Natural killer cell (primary cell): ENCODE measurements at regions of chr11 and their contacts with region 1.

Region 1: GRCh38 chr11:47514825-47515647 is 37.9 kb downstream of the CELF1 start:
- DNase-seq: no peak
- ATAC-seq: peak; percentile 32 to 56 (median 55)
- H3K4me3 ChIP-seq: no peak overlapping the region
- H3K4me3 Mint-ChIP-seq: peak overlapping the region; percentile 65
- H3K27ac ChIP-seq: peak overlapping the region; percentile 58
- H3K27ac Mint-ChIP-seq: peak overlapping the region; percentile 53 to 80
- H3K4me1 ChIP-seq: peaks cover 45% of the 10 kb centered on the region
- H3K4me1 Mint-ChIP-seq: peaks cover 58 to 63% of the 10 kb centered on the region in 2 donors
- H3K27me3 ChIP-seq: no peaks in the 10 kb centered on the region
- H3K27me3 Mint-ChIP-seq: no peaks in the 10 kb centered on the region
- CTCF ChIP-seq: no peak

Region 2: GRCh38 chr11:47378010-47378835 is 136.8 kb before region 1 on chr11 and contains the start of gene SPI1:
- intact Hi-C with region 1: no loop called
- DNase-seq: peak in 1 of 2 donors; percentile 27
- ATAC-seq: peak; percentile 57 to 80 (median 71)
- H3K4me3 ChIP-seq: peak within 1 kb of the TSS; percentile 66
- H3K4me3 Mint-ChIP-seq: no peak within 1 kb of the TSS
- H3K27ac ChIP-seq: peak within 1 kb of the TSS; percentile 69
- H3K27ac Mint-ChIP-seq: peak within 1 kb of the TSS in 1 of 2 donors; percentile 72
- H3K4me1 ChIP-seq: peaks cover 39% of the 10 kb centered on the region
- H3K4me1 Mint-ChIP-seq: peaks cover 5% of the 10 kb centered on the region in 2 donors
- H3K27me3 ChIP-seq: no peaks in the 10 kb centered on the region
- H3K27me3 Mint-ChIP-seq: no peaks in the 10 kb centered on the region
- CTCF ChIP-seq: no peak
- total RNA-seq, gene SPI1: 15.0 to 65.4 (median 55.4) TPM

Region 3: DNA sequence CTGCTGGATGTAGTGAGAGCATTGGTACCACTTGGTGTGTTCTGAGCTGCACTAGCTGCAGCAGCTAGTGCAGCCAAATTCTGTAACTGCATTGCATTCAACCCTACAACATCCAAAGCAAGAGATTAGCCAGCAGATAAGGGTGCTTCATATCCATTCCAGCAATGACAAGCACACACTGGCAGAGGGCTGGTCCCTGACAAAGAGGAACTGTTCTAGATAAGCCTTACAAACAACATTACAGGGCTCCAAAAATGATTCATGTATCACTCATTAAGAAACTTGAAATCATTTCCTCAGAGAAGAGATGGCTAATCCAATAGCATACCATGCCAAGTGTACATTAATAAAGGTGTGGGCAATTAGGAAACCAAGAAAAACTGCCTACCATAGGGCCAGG is 37.7 kb before region 1 on chr11:
- intact Hi-C with region 1: no loop called
- DNase-seq: no peak
- ATAC-seq: no peak
- H3K4me3 ChIP-seq: no peak overlapping the region
- H3K4me3 Mint-ChIP-seq: no peak overlapping the region
- H3K27ac ChIP-seq: no peak overlapping the region
- H3K27ac Mint-ChIP-seq: peak overlapping the region in 1 of 2 donors; percentile 61
- H3K4me1 ChIP-seq: no peaks in the 10 kb centered on the region
- H3K4me1 Mint-ChIP-seq: peaks cover 0 to 14% of the 10 kb centered on the region in 2 donors
- H3K27me3 ChIP-seq: no peaks in the 10 kb centered on the region
- H3K27me3 Mint-ChIP-seq: no peaks in the 10 kb centered on the region
- CTCF ChIP-seq: no peak

Region 4: DNA sequence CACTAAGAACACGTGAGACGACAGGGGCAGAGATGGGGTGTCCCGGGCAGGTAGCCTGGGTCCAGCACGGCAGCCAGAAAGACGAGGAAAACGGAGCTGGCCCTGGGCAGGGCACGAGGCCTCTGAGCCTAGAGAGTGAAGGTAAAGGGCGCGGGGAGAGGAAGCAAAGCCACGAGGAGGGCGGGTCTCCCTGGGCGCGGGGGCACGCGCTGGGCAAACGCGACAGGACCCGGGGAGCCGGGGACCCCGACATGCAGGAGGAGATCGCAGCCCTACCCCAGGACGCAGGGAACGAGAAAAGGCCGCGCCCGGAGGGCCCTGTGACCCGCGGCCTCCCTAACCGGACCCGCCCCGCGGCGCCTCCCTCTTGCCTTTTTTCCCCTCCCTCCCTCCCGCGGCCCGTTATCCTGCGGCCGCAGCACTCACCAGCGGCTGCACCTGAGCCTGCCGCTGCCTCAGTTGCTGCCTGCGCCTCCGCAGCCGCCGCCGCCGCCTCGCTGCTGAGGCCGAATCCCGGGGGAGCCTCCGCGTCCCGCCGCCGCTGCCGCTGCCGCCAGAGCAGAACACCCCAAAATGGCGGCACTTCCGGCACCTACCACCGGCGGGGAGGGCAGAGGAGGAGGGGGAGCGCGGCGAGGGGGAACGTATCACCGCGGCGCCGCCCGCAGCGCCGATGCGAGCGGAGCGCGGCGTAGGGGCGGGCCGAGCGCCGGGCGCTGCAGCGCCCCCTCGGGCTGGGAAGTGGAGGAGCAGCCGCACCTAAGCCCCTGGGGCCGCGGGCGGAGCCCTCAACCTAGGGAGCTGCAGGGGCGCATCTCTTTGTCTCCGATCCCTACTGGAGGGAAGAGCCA is 37.8 kb after region 1 on chr11 and contains the start of gene CELF1:
- intact Hi-C with region 1: loop called (anchors 5 kb)
- DNase-seq: peak; percentile 89 to 97
- ATAC-seq: peak; percentile 94 to 99 (median 95)
- H3K4me3 ChIP-seq: peak within 1 kb of the TSS; percentile 92
- H3K4me3 Mint-ChIP-seq: peak within 1 kb of the TSS; percentile 97
- H3K27ac ChIP-seq: peak within 1 kb of the TSS; percentile 81
- H3K27ac Mint-ChIP-seq: peak within 1 kb of the TSS; percentile 91 to 97
- H3K4me1 ChIP-seq: peaks cover 26% of the 10 kb centered on the region
- H3K4me1 Mint-ChIP-seq: peaks cover 33 to 42% of the 10 kb centered on the region in 2 donors
- H3K27me3 ChIP-seq: no peaks in the 10 kb centered on the region
- H3K27me3 Mint-ChIP-seq: no peaks in the 10 kb centered on the region
- CTCF ChIP-seq: peak; percentile 87
- total RNA-seq, gene CELF1: 128 to 168 (median 162) TPM